Breast epithelium (tissue), 4 donors: ENCODE measurements at regions of chr4 and their contacts with region 1.

Region 1: DNA sequence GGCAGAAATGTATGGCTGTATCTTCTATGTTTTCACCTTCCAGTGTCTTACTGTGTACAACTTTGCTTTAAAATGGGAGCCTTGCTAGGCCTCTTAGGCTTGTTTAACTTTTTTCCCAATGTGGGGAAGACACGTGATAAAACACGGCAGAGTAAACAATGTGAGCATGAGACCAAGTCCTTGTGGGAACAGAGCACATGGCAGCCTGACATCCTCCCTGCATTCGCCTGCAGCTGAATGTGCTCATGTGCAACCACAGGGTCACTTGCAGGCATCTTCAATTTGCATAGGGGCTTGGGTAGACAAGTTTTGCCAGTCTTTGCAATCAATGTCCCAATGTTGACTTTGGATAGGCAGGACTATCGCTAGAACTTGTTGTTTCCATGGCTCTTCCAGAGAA is 91.8 kb downstream of the CCNG2 start:
- DNase-seq: no peak
- H3K4me3 ChIP-seq: no peak overlapping the region
- H3K27ac ChIP-seq: no peak overlapping the region
- H3K4me1 ChIP-seq: no peaks in the 10 kb centered on the region
- H3K27me3 ChIP-seq: no peaks in the 10 kb centered on the region
- CTCF ChIP-seq: no peak
- POLR2A ChIP-seq: no peak

Region 2: DNA sequence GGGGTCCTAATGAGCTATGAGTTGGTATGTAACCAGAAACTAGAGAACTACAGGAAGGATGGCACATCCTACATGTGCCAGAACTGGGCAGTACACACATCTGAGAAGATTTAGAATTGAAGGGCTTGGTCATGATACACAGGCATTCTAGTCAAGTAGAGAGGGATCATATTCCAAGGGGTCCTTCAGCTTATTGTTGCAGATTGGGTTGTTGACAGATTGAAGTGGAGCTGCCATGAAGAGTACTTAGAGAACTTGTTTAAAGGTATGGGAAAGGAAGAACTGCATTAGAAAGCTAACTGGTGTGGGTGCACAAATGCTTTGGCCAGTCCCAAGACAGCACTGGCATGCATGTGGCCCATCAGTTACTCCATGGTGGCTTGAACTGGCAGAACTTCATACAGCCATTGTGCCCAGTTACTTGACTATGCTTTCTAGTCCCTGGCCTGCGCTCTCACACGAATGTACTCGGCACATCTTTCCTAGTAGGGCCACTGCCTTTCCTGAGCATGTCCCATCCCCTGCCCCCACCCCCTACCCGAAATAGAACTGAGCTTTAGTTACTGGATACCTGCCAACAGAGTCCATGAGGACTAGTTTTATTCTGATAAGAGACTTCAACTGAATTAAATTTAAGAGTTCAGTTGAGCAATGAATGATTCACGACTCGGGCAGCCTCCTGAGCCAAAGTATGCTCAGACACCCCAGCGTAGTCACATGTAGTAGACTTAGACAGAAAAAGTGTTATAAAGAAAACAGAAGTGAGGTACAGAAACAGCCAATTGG is 27.8 kb before region 1 on chr4:
- intact Hi-C with region 1: loop called (anchors 1 kb)
- DNase-seq: no peak
- H3K4me3 ChIP-seq: no peak overlapping the region
- H3K27ac ChIP-seq: no peak overlapping the region
- H3K4me1 ChIP-seq: no peaks in the 10 kb centered on the region
- H3K27me3 ChIP-seq: no peaks in the 10 kb centered on the region
- CTCF ChIP-seq: no peak
- POLR2A ChIP-seq: no peak